ENCODE measurements at regions of chr19 and their contacts with region 1.

Region 1: GRCh38 chr19:18419195-18419698 is at the start of gene SSBP4:
- DNase-seq: peak in 1 of 2 experiments; percentile 79
- ATAC-seq: peak in 1 of 2 experiments; percentile 25; a peak in 2 of 6 replicates
- H3K4me3 ChIP-seq: peak within 1 kb of the TSS; percentile 77
- H3K27ac ChIP-seq: peak within 1 kb of the TSS; percentile 96 to 100
- H3K4me1 ChIP-seq: peaks cover 52% of the 10 kb centered on the region
- CTCF ChIP-seq: peak; percentile 32; the same call in 2 of the 3 replicates
- EP300 ChIP-seq: no peak
- POLR2A ChIP-seq: no peak
- RAD21 ChIP-seq: no peak
- polyA plus RNA-seq, gene SSBP4: 5.4 and 6.9 TPM in 2 replicates

Region 2: GRCh38 chr19:18401580-18402112 is 17.6 kb before region 1 on chr19:
- CTCF ChIA-PET with region 1: interaction called, 85 read pairs
- POLR2A ChIA-PET with region 1: interaction called, 3 read pairs
- DNase-seq: peak in 1 of 2 experiments; percentile 85
- ATAC-seq: peak; percentile 91 to 94
- H3K4me3 ChIP-seq: no peak overlapping the region
- H3K27ac ChIP-seq: peak overlapping the region; percentile 83 to 91
- H3K4me1 ChIP-seq: peaks cover 39% of the 10 kb centered on the region
- CTCF ChIP-seq: peak; percentile 45
- EP300 ChIP-seq: no peak
- POLR2A ChIP-seq: no peak
- RAD21 ChIP-seq: peak; percentile 29 to 34; a peak in 3 of 5 replicates

Region 3: DNA sequence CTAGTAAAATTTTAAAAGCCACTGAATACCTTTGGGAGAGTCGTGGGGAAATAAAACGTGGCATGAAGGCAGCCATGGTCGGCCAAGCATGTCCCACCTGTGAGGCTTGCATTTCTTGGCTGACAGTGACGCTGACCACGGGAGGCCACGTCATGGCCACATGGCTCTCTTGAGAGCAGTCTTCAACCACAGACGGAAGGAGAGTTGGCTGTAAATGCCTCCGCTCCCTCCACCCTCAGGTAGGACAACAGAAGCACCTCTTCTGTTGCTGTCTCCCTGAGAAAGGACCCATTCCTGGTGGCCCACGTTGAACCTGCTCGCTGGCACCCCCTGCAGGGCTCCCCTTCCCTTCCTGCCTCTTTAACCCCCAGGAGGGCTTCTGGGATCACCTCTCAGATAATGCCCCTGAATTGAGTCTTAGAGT is 11.2 kb before region 1 on chr19:
- CTCF ChIA-PET with region 1: interaction called, 14 read pairs
- POLR2A ChIA-PET with region 1: no interaction called
- DNase-seq: no peak
- ATAC-seq: peak in 1 of 2 experiments; percentile 33; a peak in 1 of 6 replicates
- H3K4me3 ChIP-seq: no peak overlapping the region
- H3K27ac ChIP-seq: peak overlapping the region in 1 of 2 experiments; percentile 87; a peak in 3 of 6 replicates
- H3K4me1 ChIP-seq: peaks cover 11% of the 10 kb centered on the region; the same call in 2 of the 3 replicates
- CTCF ChIP-seq: 0 out of 3 replicates have a peak, but pooled peaks have one; percentile 18
- EP300 ChIP-seq: no peak
- POLR2A ChIP-seq: no peak
- RAD21 ChIP-seq: peak; percentile 18 to 46; a peak in 2 of 5 replicates

Measured in A549 (cell line).